ENCODE measurements at regions of chr2 and their contacts with region 1.

Region 1: DNA sequence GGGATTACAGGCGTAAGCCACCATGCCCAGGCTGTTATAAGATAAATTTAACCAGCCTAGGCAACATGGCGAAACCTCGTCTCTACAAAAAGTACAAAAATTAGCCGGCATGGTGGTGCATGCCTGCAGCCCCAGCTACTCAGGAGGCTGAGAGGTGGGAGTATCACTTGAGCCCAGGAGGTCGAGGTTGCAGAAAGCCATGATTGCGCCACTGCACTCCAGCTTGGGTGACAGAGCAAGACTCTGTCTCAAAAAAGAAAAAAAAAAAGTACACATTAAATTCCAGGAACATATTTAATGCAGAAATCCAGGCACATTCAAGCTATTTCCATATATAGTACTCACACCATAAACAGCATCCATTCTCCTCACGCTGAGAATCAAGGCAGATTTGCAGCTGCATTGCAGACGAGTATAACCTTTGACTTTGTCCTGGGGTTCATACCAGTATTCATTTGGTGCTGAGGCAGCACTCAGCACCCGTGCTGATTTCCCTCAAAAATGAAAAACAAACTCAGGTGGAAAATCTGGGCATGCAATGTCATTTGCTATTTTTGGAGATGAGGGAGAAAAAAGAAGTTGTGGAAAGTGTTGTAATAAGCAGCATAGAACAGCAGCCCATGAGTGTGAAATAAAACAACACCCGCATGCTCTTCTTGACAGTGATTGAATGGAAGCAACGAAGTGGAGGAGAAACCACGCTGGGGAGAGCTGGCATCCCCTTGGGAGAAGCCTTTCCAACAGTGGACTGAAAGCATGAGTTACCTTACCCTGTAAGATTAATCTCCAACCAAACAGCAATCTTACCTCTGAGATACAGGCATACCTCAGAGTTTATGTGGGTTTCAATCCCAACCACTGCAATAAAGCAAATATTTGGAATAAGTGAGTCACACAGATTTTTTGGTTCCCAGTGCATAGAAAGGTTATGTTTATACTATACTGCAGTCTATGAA is 46.8 kb upstream of the ANXA4 start:
- DNase-seq: no peak
- ATAC-seq: no peak
- H3K4me3 Mint-ChIP-seq: no peak overlapping the region
- H3K27ac Mint-ChIP-seq: no peak overlapping the region
- H3K4me1 Mint-ChIP-seq: peaks cover 71% of the 10 kb centered on the region
- H3K27me3 Mint-ChIP-seq: no peaks in the 10 kb centered on the region

Region 2: DNA sequence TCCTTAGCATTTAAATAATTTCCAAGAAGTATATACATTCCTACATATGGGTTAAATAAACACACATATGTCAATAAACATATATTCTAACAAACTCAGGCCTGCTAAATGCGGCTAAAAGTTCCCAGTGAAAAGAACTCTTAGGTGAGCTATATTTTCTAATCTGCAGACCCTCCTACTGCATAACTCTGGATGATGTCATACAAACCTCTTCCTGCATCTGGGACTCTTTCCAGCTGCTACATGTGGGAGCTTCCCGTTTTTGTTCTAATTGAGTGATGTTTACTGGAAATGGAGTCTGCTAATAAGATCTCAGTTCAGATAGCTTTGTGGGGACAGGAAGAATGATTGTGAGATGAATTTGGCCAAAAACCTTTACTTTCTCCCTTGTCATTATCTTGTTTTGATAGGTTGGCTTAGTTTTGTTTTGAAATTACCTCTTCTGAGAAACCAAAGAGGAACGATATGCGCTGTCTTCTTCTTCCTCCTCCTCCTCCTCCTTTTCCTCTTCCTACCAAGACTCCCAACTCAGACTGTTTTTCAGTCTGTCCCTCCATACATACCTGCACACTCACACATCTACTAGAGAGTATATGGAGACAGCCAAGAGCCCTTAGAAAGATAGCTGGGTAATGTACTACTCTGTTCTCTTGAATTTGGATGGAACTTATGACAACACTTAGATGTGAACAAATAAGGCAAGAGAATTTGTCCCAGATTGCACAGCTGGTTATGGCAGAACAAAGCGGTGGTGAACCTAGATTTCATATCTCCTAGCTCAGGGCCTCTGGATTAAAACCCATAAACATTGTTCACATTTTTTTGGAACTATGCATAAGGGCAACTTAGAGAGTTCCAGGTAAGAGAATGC is 11.8 kb before region 1 on chr2:
- CTCF ChIA-PET with region 1: interaction called, 6 read pairs
- POLR2A ChIA-PET with region 1: interaction called, 10 read pairs
- DNase-seq: no peak
- ATAC-seq: peak; percentile 35
- H3K4me3 Mint-ChIP-seq: peak overlapping the region; percentile 26
- H3K27ac Mint-ChIP-seq: peak overlapping the region; percentile 68
- H3K4me1 Mint-ChIP-seq: peaks cover 51% of the 10 kb centered on the region
- H3K27me3 Mint-ChIP-seq: no peaks in the 10 kb centered on the region

Measured in activated CD8-positive, alpha-beta T cell treated with anti-CD3 and anti-CD28 coated beads, Interleukin-2, amount 10 ng/mL, durations not matched to agents 7 days and 5 days (primary cell).